GM12878 (cell line): ENCODE measurements at regions of chrX and their contacts with region 1.

Region 1: DNA sequence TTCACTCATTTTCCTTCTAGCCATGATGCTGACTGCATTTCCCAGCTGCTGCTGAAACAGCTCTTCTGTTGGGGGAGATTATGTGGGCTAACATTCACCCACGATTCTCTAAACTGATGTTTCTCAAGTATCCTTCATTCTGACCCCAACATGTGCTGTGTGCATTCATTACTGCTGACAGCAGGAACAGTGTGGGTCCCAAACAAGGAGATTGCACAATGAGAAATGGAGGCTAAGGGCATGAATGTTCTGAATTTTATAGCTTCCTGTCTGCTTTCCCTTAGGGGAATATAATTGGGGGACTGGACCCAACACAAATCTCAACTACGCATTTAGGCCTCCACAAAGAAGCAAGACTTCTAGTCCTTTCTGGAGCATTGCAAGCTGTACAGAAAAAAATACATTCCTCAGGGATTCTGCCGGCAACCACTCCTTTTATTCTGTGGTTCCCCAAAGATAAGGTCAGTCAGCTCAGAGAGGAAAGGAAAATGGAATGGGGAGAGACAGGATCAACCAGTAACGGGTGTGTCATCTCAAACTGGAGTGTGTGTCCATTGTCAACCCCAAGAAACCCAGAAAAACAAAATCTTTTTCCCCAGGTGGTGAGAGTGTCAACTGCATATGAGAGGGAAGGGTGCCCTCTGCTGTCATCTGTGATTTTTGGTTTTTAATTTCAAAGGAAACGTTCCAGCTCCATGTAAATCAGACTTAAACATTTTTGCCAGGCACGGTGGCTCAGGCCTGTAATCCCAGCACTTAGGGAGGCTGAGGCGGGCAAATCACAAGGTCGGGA is 81.5 kb upstream of the EGFL6 start:
- DNase-seq: peak; percentile 72
- ATAC-seq: peak; percentile 86
- H3K4me3 ChIP-seq: no peak overlapping the region
- H3K27ac ChIP-seq: peak overlapping the region; percentile 95
- H3K4me1 ChIP-seq: peaks cover 16% of the 10 kb centered on the region
- H3K27me3 ChIP-seq: no peaks in the 10 kb centered on the region
- CTCF ChIP-seq: peak; percentile 56 to 80 (median 62)
- EP300 ChIP-seq: no peak
- POLR2A ChIP-seq: no peak
- RAD21 ChIP-seq: peak; percentile 98

Region 2: GRCh38 chrX:12814420-12814819 is 673.5 kb before region 1 on chrX:
- CTCF ChIA-PET with region 1: interaction called, 30 read pairs
- POLR2A ChIA-PET with region 1: interaction called, 3 read pairs
- RAD21 ChIA-PET with region 1: interaction called, 22 read pairs
- SMC1A ChIA-PET with region 1: interaction called, 25 read pairs
- in situ Hi-C with region 1: loop called (anchors 10 kb)
- intact Hi-C with region 1: loop called (anchors 2 kb)
- DNase-seq: peak; percentile 59
- ATAC-seq: peak; percentile 97
- H3K4me3 ChIP-seq: no peak overlapping the region
- H3K27ac ChIP-seq: no peak overlapping the region
- H3K4me1 ChIP-seq: no peaks in the 10 kb centered on the region
- H3K27me3 ChIP-seq: no peaks in the 10 kb centered on the region
- CTCF ChIP-seq: peak; percentile 66 to 86 (median 69)
- EP300 ChIP-seq: no peak
- POLR2A ChIP-seq: no peak
- RAD21 ChIP-seq: peak; percentile 98

Region 3: DNA sequence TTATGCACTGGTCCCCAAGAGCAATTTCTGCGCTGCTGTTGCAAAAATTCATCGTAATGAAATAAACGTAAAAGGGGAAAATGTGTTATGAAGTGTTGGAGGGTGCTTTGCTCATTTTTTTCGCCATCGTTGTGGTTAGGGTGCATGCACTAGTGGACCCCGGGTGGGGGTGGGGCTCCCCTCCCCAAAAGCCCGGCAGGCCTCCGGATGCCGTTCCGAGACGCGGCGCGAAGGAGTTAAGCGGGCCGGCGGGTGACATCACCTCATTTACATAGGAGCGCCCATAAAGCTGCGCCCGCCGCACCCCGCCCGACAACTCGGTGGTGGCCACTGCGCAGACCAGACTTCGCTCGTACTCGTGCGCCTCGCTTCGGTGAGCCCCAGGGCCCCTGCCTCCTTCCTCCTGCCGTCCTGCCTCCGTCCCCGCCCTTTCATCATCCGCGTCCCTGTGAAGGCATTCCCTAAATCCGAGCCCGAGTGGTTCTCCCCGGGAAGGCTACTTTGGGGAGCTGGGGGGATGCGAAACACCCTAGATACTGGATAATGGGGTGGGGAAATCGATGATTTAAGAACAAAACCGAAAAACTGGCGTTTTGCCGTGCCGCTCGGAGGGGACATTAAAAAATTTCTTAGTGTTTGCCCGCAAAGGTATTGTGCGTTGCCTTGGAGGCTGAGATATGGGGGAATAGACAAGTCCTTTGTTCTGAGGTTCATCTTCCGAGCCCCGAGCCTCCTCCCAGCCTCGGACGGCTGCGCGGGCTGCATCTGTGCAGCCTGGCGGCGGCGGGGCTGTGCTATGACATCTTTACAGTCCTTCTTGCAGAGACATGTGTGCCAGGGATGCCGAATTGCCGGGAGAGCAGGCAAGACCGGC is 512.9 kb before region 1 on chrX and contains the start of gene TMSB4X:
- CTCF ChIA-PET with region 1: interaction called, 9 read pairs
- POLR2A ChIA-PET with region 1: no interaction called
- RAD21 ChIA-PET with region 1: interaction called, 18 read pairs
- SMC1A ChIA-PET with region 1: interaction called, 3 read pairs
- in situ Hi-C with region 1: no loop called
- intact Hi-C with region 1: loop called (anchors 2 kb)
- DNase-seq: no peak
- ATAC-seq: peak; percentile 35
- H3K4me3 ChIP-seq: peak within 1 kb of the TSS; percentile 81
- H3K27ac ChIP-seq: peak within 1 kb of the TSS; percentile 90
- H3K4me1 ChIP-seq: peaks cover 6% of the 10 kb centered on the region; the same call in 1 of the 2 replicates
- H3K27me3 ChIP-seq: no peaks in the 10 kb centered on the region
- CTCF ChIP-seq: no peak
- EP300 ChIP-seq: no peak
- POLR2A ChIP-seq: peak; percentile 97
- RAD21 ChIP-seq: no peak
- polyA plus RNA-seq, gene TMSB4X: 32,576 to 35,408 TPM

Region 4: GRCh38 chrX:13005661-13006473 is 482.1 kb before region 1 on chrX:
- CTCF ChIA-PET with region 1: interaction called, 6 read pairs
- POLR2A ChIA-PET with region 1: interaction called, 6 read pairs
- RAD21 ChIA-PET with region 1: interaction called, 8 read pairs
- SMC1A ChIA-PET with region 1: interaction called, 13 read pairs
- in situ Hi-C with region 1: no loop called
- intact Hi-C with region 1: loop called (anchors 5 kb)
- DNase-seq: peak; percentile 89
- ATAC-seq: peak; percentile 55
- H3K4me3 ChIP-seq: peak overlapping the region; percentile 28; the same call in 1 of the 2 replicates
- H3K27ac ChIP-seq: peak overlapping the region; percentile 91
- H3K4me1 ChIP-seq: peaks cover 83% of the 10 kb centered on the region
- H3K27me3 ChIP-seq: no peaks in the 10 kb centered on the region
- CTCF ChIP-seq: no peak
- EP300 ChIP-seq: peak; percentile 96
- POLR2A ChIP-seq: no peak
- RAD21 ChIP-seq: no peak; the same call in 1 of the 2 replicates

Region 5: GRCh38 chrX:13254076-13254785 is 233.7 kb before region 1 on chrX:
- CTCF ChIA-PET with region 1: interaction called, 143 read pairs
- POLR2A ChIA-PET with region 1: interaction called, 8 read pairs
- RAD21 ChIA-PET with region 1: interaction called, 148 read pairs
- SMC1A ChIA-PET with region 1: interaction called, 142 read pairs
- in situ Hi-C with region 1: loop called (anchors 10 kb)
- intact Hi-C with region 1: loop called (anchors 1 kb)
- DNase-seq: peak; percentile 56
- ATAC-seq: peak; percentile 59
- H3K4me3 ChIP-seq: no peak overlapping the region; the same call in 1 of the 2 replicates
- H3K27ac ChIP-seq: peak overlapping the region; percentile 92
- H3K4me1 ChIP-seq: peaks cover 58% of the 10 kb centered on the region
- H3K27me3 ChIP-seq: no peaks in the 10 kb centered on the region
- CTCF ChIP-seq: peak; percentile 33 to 52 (median 41); a peak in 4 of 6 replicates
- EP300 ChIP-seq: no peak
- POLR2A ChIP-seq: no peak
- RAD21 ChIP-seq: peak; percentile 75

Region 6: GRCh38 chrX:13341491-13342101 is 146.3 kb before region 1 on chrX:
- CTCF ChIA-PET with region 1: interaction called, 7 read pairs
- POLR2A ChIA-PET with region 1: no interaction called
- RAD21 ChIA-PET with region 1: interaction called, 5 read pairs
- SMC1A ChIA-PET with region 1: interaction called, 8 read pairs
- in situ Hi-C with region 1: no loop called
- intact Hi-C with region 1: loop called (anchors 1 kb)
- DNase-seq: no peak
- ATAC-seq: peak; percentile 48
- H3K4me3 ChIP-seq: no peak overlapping the region
- H3K27ac ChIP-seq: no peak overlapping the region
- H3K4me1 ChIP-seq: peaks cover 3% of the 10 kb centered on the region; the same call in 1 of the 2 replicates
- H3K27me3 ChIP-seq: no peaks in the 10 kb centered on the region
- CTCF ChIP-seq: peak in 1 of 3 experiments; percentile 10; a peak in 1 of 6 replicates
- EP300 ChIP-seq: no peak
- POLR2A ChIP-seq: no peak
- RAD21 ChIP-seq: peak; percentile 42